GM13977 (cell line): ENCODE measurements at regions of chr22 and their contacts with region 1.

Region 1: GRCh38 chr22:38599466-38599865 is 29.5 kb upstream of the DMC1 start:
- DNase-seq: no peak
- CTCF ChIP-seq: no peak

Region 2: GRCh38 chr22:38051900-38052862 is 547.3 kb before region 1 on chr22:
- in situ Hi-C with region 1: loop called (anchors 10 kb)
- DNase-seq: peak; percentile 91
- CTCF ChIP-seq: peak; percentile 94

Region 3: DNA sequence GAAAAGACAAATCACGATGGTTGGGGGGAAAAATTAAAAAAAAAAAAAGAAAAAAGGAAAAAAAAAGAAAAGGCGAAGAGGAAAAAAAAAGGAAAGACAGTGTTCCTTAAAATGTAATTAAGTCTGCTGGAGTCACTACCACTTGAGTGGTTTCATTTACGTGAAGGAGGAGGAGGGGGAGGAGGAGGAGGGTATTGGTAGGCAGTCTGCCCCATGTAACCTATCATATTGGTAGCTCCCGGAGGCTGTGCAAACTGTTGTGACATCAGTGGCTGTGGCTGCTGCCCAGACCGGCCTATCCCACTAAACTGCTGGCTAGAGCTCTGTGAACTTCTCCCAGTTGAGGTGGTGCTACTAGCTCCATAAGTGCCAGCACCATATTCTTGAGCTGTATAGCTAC is 113.7 kb before region 1 on chr22:
- in situ Hi-C with region 1: no loop called
- DNase-seq: no peak
- CTCF ChIP-seq: no peak

Region 4: DNA sequence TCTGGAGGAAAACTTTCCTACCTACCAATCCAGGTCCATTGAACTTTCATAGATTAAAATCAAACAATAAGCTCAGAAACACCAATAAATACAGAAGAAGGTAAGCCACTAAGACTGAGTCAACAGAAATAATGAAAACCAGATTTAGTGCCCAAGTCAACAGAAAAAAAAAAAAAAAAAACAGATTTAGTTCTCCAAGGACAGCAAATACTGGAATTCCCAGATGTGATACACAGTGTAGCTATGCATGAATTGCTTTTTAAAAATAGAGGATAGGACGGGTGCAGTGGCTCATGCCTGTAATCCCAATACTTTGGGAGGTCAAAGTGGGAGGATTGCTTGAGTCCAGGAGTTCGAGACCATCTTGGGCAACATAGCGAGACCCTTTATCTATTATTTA is 45.2 kb before region 1 on chr22:
- in situ Hi-C with region 1: no loop called
- DNase-seq: no peak
- CTCF ChIP-seq: no peak

Region 5: GRCh38 chr22:38696606-38697424 is 97.3 kb after region 1 on chr22:
- in situ Hi-C with region 1: no loop called
- DNase-seq: no peak
- CTCF ChIP-seq: no peak